HCT116 (cell line): ENCODE measurements at regions of chr14 and their contacts with region 1.

Region 1: DNA sequence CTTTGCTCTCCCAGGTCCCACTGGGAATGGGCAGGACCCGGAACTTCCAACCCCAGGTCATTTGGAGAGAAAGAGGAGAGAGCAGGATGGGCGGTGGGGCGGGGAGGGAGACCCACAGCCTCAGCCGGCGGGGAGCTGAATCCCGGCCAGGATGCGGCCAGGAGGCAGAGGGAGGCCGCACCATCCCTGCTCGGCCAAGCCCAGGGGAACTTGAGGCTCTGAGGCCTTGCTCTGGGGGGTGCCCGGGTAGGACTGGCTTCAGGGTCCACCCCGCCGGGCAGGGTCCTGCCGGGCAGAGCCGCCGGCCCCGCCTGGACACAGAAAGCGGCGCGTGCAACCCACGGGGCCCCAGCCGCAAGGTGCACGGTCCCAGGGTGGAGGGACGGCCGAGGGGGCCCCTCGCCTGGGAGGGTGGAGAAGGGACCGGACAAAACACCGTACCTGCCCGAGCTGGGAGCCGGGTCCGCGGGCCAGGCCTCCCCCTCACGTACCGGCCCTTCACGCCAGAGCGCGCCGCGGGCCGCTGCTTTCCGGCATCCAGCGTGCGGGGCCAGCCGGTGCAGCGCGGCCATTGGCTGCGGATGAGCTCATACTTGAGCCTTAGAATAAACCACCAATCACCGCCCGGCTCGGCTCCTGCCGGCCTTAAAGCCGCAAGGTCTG is at the start of gene RPS6KL1:
- DNase-seq: peak; percentile 68
- ATAC-seq: peak; percentile 98
- H3K4me3 ChIP-seq: peak within 1 kb of the TSS; percentile 74 to 90
- H3K27ac ChIP-seq: no peak within 1 kb of the TSS
- H3K4me1 ChIP-seq: peaks cover 0 to 12% of the 10 kb centered on the region in 2 experiments; a peak in 2 of 4 replicates
- H3K27me3 ChIP-seq: no peaks in the 10 kb centered on the region
- CTCF ChIP-seq: no peak
- POLR2A ChIP-seq: no peak
- RAD21 ChIP-seq: no peak
- total RNA-seq, gene RPS6KL1: 6.7 TPM

Region 2: DNA sequence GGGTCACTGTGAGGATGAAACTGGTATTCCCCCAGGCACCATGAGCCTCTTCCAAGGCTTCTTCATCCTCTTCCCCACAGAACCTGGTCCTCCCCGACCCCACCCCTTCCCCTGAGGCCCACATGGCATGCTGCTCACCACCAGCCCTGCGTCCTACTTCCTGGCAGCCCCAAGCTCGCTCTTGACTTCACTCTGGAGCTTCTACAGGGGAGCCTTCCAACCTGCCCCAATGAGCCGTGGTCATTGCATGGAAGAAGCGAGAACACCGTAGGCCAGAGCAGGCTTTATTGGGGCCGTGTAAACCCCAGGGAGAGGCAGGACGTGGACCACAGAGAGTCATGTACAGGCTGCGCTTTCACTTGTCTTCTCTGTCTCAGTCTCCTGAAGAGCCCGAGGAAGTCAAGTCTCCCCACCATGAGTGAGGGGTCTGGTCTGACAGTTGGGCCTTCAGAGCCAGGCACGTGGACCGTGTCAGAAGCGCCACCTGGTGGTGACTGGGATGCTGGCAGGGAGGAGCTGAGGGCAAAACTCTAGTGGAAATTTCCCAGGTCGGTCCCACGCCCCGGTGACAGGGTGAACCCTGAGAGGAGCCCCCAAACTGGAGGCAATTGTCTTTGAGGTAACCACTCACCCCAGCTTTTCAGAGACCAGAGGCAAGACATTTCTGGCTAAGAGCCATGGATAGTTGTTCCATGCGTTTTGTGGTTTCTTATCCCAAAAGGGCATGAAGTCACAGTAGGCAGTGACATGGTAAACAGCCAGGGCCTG is 17.3 kb before region 1 on chr14:
- CTCF ChIA-PET with region 1: interaction called, 13 read pairs
- POLR2A ChIA-PET with region 1: interaction called, 4 read pairs
- RAD21 ChIA-PET with region 1: no interaction called
- intact Hi-C with region 1: no loop called
- DNase-seq: peak; percentile 28
- ATAC-seq: peak; percentile 68
- H3K4me3 ChIP-seq: no peak overlapping the region
- H3K27ac ChIP-seq: no peak overlapping the region
- H3K4me1 ChIP-seq: peaks cover 3 to 8% of the 10 kb centered on the region in 2 experiments; a peak in 2 of 4 replicates
- H3K27me3 ChIP-seq: no peaks in the 10 kb centered on the region
- CTCF ChIP-seq: peak; percentile 75 to 98 (median 97); a peak in 5 of 6 replicates
- POLR2A ChIP-seq: no peak
- RAD21 ChIP-seq: peak; percentile 71

Region 3: GRCh38 chr14:75009176-75009575 is 86.3 kb after region 1 on chr14:
- CTCF ChIA-PET with region 1: no interaction called
- POLR2A ChIA-PET with region 1: no interaction called
- RAD21 ChIA-PET with region 1: no interaction called
- intact Hi-C with region 1: no loop called
- DNase-seq: no peak
- ATAC-seq: no peak
- H3K4me3 ChIP-seq: no peak overlapping the region
- H3K27ac ChIP-seq: no peak overlapping the region
- H3K4me1 ChIP-seq: peaks cover under 1 to 13% of the 10 kb centered on the region in 2 experiments
- H3K27me3 ChIP-seq: no peaks in the 10 kb centered on the region
- CTCF ChIP-seq: no peak
- POLR2A ChIP-seq: no peak
- RAD21 ChIP-seq: no peak

Region 4: DNA sequence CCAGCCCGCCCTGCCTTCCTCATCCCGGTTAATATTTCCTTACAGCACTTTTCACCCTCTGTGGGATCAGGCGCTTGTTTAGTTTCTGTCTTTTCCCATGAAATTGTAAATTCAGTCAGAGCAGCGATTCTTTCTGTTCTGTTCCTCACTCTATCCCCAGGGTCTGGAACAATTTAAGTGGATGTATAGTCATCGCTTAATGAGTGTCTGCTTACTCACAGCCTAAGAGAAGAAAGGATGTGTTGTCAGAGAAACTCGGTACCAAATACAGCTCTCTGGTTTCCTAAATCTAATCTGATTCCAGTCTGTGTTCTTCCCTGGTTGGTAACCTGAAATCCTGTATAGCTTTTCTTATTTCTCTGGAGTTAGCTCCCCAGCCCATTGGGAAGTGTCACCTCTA is 400.7 kb after region 1 on chr14:
- CTCF ChIA-PET with region 1: no interaction called
- POLR2A ChIA-PET with region 1: no interaction called
- RAD21 ChIA-PET with region 1: no interaction called
- intact Hi-C with region 1: no loop called
- DNase-seq: no peak
- ATAC-seq: no peak
- H3K4me3 ChIP-seq: no peak overlapping the region
- H3K27ac ChIP-seq: no peak overlapping the region
- H3K4me1 ChIP-seq: no peaks in the 10 kb centered on the region
- H3K27me3 ChIP-seq: no peaks in the 10 kb centered on the region
- CTCF ChIP-seq: no peak
- POLR2A ChIP-seq: no peak
- RAD21 ChIP-seq: no peak